Activated CD4-positive, alpha-beta T cell treated with anti-CD3 and anti-CD28 coated beads for 36 hours (primary cell): ENCODE measurements at regions of chr1 and their contacts with region 1.

Region 1: GRCh38 chr1:45750298-45751038 is at the start of gene IPP:
- DNase-seq: peak; percentile 97
- ATAC-seq: peak; percentile 99
- H3K4me3 Mint-ChIP-seq: peak within 1 kb of the TSS; percentile 93
- H3K27ac Mint-ChIP-seq: peak within 1 kb of the TSS; percentile 95
- H3K4me1 Mint-ChIP-seq: peaks cover 27% of the 10 kb centered on the region
- H3K27me3 Mint-ChIP-seq: no peaks in the 10 kb centered on the region
- total RNA-seq, gene IPP: 11.6 to 21.8 TPM

Region 2: DNA sequence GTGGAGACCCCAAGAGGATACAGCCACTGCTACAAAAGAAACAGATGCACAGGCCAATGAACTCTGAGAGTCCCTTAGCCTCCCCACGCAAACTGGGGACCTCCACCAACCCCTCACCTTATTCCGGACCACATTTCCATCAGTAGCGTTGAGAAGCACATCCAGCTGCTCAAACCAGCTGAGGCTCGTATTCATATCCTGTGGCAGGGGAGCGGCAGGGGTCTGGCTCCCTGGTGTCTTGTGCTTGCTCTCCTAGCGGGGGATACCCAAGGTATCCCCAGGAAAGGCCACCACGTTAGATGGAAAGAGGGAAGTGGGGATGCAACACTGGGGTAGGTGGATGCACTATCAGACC is 251.1 kb before region 1 on chr1:
- CTCF ChIA-PET with region 1: no interaction called
- POLR2A ChIA-PET with region 1: no interaction called
- intact Hi-C with region 1: loop called in 1 of 2 experiments (anchors 1 kb)
- DNase-seq: peak; percentile 45
- ATAC-seq: no peak
- H3K4me3 Mint-ChIP-seq: peak overlapping the region; percentile 81
- H3K27ac Mint-ChIP-seq: peak overlapping the region; percentile 92
- H3K4me1 Mint-ChIP-seq: peaks cover 23% of the 10 kb centered on the region
- H3K27me3 Mint-ChIP-seq: no peaks in the 10 kb centered on the region

Region 3: DNA sequence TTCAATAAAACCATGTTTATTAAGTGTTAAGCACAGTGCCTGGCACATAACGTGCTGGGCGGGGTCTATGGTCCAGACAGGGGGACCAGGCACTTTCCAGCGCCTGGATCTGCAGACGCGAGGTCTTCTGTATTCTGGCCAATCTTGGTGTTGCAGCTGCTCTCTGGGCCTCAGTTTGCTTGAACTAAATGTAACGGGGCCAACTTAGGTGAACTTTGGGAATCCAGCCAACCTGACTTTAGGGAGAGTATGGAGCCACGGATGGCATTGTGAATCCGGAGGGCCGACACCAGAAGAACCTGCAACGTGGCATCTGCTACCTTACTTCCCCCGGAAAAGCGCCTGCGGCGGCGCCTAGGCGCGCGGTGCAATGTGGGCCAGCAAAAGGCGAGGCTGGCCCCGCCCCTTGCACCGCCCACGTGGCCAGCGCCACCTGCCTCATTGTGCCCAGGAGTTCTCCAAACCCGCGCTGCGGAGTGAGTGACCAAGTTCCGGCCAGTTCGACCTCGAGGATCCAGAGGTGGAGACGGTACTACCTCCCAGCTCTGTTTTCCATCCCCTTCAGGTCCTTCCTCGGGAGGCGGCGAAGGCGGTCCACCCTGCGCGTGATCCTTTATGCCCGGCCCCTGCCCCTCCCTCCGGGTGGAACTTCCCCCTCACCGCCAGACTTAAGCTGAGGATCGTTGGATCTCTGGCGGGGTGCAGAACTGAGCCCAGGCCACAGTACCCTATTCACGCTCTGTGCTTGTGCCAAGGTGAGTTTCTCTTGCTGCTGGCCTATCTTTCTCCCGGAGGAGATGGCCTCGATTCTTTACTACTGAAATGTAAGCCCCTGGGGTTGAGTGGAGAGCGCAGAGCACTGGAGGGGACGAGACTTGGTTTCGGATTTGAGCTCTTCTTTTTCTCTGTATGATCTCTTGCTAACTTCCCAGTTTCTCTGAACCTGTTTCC is 199.8 kb before region 1 on chr1 and contains the start of gene AKR1A1:
- CTCF ChIA-PET with region 1: no interaction called
- POLR2A ChIA-PET with region 1: no interaction called
- intact Hi-C with region 1: loop called in 1 of 2 experiments (anchors 1 kb)
- DNase-seq: peak; percentile 95
- ATAC-seq: peak; percentile 94
- H3K4me3 Mint-ChIP-seq: peak within 1 kb of the TSS; percentile 94
- H3K27ac Mint-ChIP-seq: peak within 1 kb of the TSS; percentile 94
- H3K4me1 Mint-ChIP-seq: peaks cover 16% of the 10 kb centered on the region
- H3K27me3 Mint-ChIP-seq: no peaks in the 10 kb centered on the region
- total RNA-seq, gene AKR1A1: 140 to 181 TPM

Region 4: GRCh38 chr1:45803301-45803780 is 52.9 kb after region 1 on chr1 and contains the start of gene MAST2:
- CTCF ChIA-PET with region 1: no interaction called
- POLR2A ChIA-PET with region 1: no interaction called
- intact Hi-C with region 1: loop called (anchors 1 to 5 kb)
- DNase-seq: peak; percentile 92
- ATAC-seq: peak; percentile 96
- H3K4me3 Mint-ChIP-seq: peak within 1 kb of the TSS; percentile 98
- H3K27ac Mint-ChIP-seq: peak within 1 kb of the TSS; percentile 82
- H3K4me1 Mint-ChIP-seq: peaks cover 27% of the 10 kb centered on the region
- H3K27me3 Mint-ChIP-seq: no peaks in the 10 kb centered on the region
- total RNA-seq, gene MAST2: 20.1 to 22.9 TPM

Region 5: DNA sequence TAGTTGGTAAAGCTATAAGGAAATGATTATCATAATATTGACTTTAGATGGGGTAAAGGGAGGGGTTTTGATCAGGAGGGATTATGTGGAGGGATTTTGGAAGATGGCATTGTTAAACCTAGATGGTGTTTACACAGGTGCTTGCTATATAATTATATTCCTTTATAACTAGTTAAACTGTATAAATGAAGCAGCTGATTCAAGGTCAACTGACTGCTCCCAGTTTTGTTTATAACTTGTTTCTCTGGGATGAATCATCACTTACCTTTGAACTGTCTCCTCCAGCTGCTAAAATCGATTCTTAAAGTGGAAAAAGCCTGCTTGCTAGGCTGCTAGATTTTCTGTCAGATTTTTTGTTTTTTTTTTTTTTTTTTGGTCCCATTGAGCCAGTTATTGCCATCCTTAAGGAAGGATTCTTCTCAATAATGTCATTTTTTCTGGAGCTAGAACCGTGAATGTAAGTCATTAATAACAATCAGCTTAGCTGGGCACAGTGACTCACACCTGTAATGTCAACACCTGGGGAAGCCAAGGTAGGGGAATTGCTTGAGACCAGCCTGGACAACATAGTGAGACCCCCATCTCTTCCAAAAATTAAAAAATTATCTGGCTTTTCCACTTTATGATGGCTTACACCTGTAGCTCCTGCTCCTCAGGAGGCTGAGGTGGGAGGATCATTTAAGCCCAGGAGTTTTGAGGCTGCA is 228.8 kb after region 1 on chr1:
- CTCF ChIA-PET with region 1: no interaction called
- POLR2A ChIA-PET with region 1: no interaction called
- intact Hi-C with region 1: no loop called
- DNase-seq: no peak
- ATAC-seq: no peak
- H3K4me3 Mint-ChIP-seq: no peak overlapping the region
- H3K27ac Mint-ChIP-seq: no peak overlapping the region
- H3K4me1 Mint-ChIP-seq: no peaks in the 10 kb centered on the region
- H3K27me3 Mint-ChIP-seq: no peaks in the 10 kb centered on the region

Region 6: DNA sequence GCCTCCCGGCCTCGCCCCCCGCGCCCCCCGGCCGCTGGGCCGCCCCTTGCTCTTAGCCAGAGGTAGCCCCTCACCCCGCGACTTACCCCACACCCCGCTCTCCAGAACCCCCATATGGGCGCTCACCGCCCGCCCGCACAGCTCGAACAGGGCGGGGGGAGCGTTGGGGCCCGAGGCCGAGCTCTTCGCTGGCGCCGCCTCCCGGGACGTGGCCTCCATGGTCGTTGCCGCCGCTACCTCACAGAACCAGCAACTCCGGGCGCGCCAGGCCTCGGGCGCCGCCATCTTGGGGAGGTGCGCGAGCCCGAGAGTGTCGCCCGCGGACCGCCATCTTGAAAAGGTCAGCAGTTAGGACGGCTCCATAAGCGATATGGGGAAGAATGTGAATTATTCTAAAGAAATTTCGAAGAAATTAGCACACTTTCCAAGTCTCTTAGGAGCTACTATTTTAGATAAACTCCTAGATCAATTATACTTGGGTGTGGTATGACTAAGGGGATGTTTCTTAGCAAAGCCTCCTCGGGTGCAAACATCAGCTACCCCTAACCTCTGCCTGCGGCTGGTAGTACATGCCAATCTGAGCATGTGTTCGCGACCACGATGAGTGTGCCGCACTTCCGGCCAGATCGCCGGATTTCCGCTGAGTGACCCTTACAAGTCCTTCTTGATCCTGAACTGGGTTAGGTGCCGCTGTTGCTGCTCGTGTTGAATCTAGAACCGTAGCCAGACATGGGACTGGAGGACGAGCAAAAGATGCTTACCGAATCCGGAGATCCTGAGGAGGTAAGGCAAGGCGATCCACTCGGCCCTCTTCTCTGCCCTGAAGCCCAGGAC is 552.8 kb after region 1 on chr1 and contains the starts of genes LRRC41 and UQCRH:
- CTCF ChIA-PET with region 1: no interaction called
- POLR2A ChIA-PET with region 1: no interaction called
- intact Hi-C with region 1: loop called in 1 of 2 experiments (anchors 1 kb)
- DNase-seq: peak; percentile 96
- ATAC-seq: peak; percentile 88
- H3K4me3 Mint-ChIP-seq: peak within 1 kb of the TSS; percentile 95
- H3K27ac Mint-ChIP-seq: peak within 1 kb of the TSS; percentile 95
- H3K4me1 Mint-ChIP-seq: peaks cover 44% of the 10 kb centered on the region
- H3K27me3 Mint-ChIP-seq: no peaks in the 10 kb centered on the region
- total RNA-seq, gene LRRC41: 33.4 to 34.7 TPM
- total RNA-seq, gene UQCRH: 258 to 391 TPM